Endothelial cell of umbilical vein (primary cell): ENCODE measurements at regions of chr2 and their contacts with region 1.

Region 1: DNA sequence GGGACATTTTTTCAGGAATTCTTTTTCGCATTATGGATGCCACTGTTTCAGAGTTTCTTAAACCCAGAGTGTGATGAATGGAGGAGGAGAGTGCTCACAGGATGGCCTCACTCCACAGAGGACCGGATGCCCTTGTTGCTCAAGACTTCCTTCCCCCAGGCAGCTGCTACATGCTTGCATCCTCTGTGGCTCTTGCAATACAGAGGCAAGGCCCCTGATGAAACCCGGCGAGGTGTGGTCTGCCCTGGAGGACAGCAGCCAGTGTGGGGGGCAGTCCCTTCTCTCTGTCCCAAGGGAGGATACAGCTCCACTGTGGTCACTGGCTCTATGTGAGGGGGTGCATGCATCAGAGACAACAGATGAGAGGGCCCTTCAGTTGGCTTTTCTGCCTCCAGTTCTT is 109.6 kb downstream of the SH3RF3 start:
- DNase-seq: peak; percentile 89
- H3K4me3 ChIP-seq: peak overlapping the region in 1 of 3 experiments; percentile 17
- H3K27ac ChIP-seq: peak overlapping the region; percentile 93
- H3K4me1 ChIP-seq: peaks cover 51% of the 10 kb centered on the region
- H3K27me3 ChIP-seq: no peaks in the 10 kb centered on the region
- CTCF ChIP-seq: no peak
- POLR2A ChIP-seq: peak; percentile 38

Region 2: DNA sequence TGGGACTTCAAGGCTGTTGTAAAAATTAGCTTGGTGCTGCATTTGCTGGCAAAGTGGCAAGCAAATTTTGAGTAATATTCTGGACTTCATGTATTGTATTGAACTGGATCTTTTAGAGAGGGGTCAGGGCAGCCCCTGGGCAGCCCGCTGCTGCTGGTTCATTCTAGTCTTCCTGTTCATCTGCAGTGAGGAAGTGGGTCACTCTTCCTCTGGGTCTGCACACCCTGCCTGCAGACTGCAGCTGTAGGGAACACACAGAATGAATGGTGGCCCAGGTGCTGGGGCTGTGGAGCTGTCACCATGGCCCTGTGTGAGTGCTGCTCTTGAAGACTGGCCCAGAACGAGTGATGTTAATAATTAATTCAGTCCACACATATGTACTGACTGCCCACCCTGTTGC is 100.1 kb before region 1 on chr2:
- CTCF ChIA-PET with region 1: interaction called, 3 read pairs
- POLR2A ChIA-PET with region 1: no interaction called
- dilution Hi-C with region 1: no loop called
- intact Hi-C with region 1: loop called (anchors 2 kb)
- DNase-seq: peak; percentile 59
- H3K4me3 ChIP-seq: no peak overlapping the region
- H3K27ac ChIP-seq: no peak overlapping the region
- H3K4me1 ChIP-seq: peaks cover 33% of the 10 kb centered on the region
- H3K27me3 ChIP-seq: no peaks in the 10 kb centered on the region
- CTCF ChIP-seq: no peak
- POLR2A ChIP-seq: no peak

Region 3: DNA sequence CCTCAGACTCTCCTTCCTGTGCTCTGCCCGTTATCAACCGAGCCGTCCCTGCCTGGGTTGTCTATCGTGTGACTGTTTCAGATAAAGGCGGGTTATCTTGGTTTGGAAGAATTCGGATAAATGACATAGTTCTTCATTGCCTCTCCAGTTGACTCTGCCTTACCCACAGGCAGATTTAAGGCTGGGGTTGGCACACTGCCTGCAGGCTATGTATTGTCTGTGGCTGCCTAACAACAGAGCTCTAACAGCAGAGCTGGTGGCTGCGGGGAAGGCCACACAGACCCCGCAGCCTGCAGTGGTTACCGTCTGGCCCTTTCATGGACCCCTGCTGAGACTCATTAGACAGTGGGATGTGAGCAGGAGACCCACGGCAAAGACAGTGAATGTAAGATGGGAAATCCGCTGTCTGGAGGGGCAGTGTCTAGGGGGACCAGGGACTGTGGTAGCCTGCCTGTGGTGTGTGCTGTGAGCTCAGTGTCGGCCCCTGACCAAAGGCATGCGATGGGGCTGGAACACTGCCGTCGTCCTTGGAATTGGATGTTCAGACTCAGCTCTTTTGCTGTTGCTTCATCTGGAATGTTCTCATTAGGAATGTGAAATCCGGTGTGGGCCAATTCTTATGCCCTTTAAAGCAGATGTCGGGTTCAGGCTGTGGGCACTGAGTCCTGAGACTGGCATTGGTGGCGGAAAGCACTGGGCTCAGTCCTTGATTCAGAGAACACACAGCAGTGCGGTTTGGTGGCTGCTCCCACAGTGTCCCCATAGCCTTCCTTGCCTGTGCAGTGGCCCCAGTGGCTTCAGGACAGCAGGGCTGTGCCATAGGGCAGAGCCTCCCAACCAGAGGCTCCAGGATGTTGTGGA is 65.0 kb before region 1 on chr2:
- CTCF ChIA-PET with region 1: interaction called, 6 read pairs
- POLR2A ChIA-PET with region 1: interaction called, 4 read pairs
- dilution Hi-C with region 1: no loop called
- intact Hi-C with region 1: loop called (anchors 1 kb)
- DNase-seq: peak; percentile 82
- H3K4me3 ChIP-seq: no peak overlapping the region
- H3K27ac ChIP-seq: peak overlapping the region; percentile 90
- H3K4me1 ChIP-seq: peaks cover 55% of the 10 kb centered on the region
- H3K27me3 ChIP-seq: no peaks in the 10 kb centered on the region
- CTCF ChIP-seq: no peak
- POLR2A ChIP-seq: peak; percentile 48

Region 4: DNA sequence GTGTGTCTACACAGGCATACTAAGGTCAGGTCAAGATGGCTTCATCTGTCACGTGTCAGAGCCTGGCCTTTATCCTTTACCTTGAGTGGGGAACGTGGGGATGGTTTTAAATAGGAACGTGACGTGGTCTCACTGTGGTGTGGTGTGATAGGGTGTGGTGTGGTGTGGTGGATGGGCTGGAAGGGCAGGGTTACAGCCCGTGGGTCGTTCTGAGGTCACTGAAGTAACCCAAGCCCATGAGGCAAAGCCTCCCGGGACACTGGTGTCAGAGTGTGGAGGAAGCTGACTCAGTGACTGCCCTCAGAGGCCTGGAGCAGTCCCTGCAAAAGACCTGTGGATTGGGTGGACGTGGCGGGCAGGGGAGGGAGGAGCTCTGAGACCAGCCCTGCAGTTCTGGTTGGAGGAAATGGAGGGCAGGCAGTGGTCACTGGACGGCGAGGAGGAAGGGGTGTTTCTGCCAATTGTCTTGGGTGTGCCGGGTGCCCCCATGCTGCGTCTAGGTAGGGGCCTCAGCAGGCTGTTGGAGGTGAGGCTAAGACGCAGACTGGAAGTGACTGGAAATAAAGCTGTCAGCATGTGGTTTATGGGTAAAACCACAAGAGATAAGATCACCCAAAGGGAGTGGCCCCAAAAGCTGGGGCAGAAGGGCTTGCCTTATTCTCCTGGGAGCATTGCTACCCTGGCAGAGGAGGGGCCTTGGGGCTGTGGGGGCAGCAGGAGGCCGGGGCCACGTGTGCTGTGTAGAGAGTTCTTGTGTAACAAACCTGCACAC is 24.7 kb before region 1 on chr2:
- CTCF ChIA-PET with region 1: interaction called, 4 read pairs
- POLR2A ChIA-PET with region 1: no interaction called
- dilution Hi-C with region 1: no loop called
- intact Hi-C with region 1: loop called (anchors 2 kb)
- DNase-seq: peak; percentile 60
- H3K4me3 ChIP-seq: no peak overlapping the region
- H3K27ac ChIP-seq: peak overlapping the region; percentile 17
- H3K4me1 ChIP-seq: peaks cover 30% of the 10 kb centered on the region
- H3K27me3 ChIP-seq: no peaks in the 10 kb centered on the region
- CTCF ChIP-seq: no peak
- POLR2A ChIP-seq: peak; percentile 11

Region 5: GRCh38 chr2:109260886-109261700 is 22.5 kb after region 1 on chr2:
- CTCF ChIA-PET with region 1: interaction called, 5 read pairs
- POLR2A ChIA-PET with region 1: no interaction called
- dilution Hi-C with region 1: no loop called
- intact Hi-C with region 1: loop called (anchors 1 kb)
- DNase-seq: no peak
- H3K4me3 ChIP-seq: no peak overlapping the region
- H3K27ac ChIP-seq: no peak overlapping the region
- H3K4me1 ChIP-seq: peaks cover 26% of the 10 kb centered on the region
- H3K27me3 ChIP-seq: no peaks in the 10 kb centered on the region
- CTCF ChIP-seq: peak; percentile 24 to 45
- POLR2A ChIP-seq: no peak

Region 6: GRCh38 chr2:109266998-109267854 is 28.6 kb after region 1 on chr2:
- CTCF ChIA-PET with region 1: interaction called, 5 read pairs
- POLR2A ChIA-PET with region 1: no interaction called
- dilution Hi-C with region 1: no loop called
- intact Hi-C with region 1: loop called (anchors 2 kb)
- DNase-seq: peak; percentile 87
- H3K4me3 ChIP-seq: no peak overlapping the region
- H3K27ac ChIP-seq: peak overlapping the region; percentile 95
- H3K4me1 ChIP-seq: peaks cover 39% of the 10 kb centered on the region
- H3K27me3 ChIP-seq: no peaks in the 10 kb centered on the region
- CTCF ChIP-seq: no peak
- POLR2A ChIP-seq: peak; percentile 45